ENCODE measurements at regions of chr2 and their contacts with region 1.

Region 1: DNA sequence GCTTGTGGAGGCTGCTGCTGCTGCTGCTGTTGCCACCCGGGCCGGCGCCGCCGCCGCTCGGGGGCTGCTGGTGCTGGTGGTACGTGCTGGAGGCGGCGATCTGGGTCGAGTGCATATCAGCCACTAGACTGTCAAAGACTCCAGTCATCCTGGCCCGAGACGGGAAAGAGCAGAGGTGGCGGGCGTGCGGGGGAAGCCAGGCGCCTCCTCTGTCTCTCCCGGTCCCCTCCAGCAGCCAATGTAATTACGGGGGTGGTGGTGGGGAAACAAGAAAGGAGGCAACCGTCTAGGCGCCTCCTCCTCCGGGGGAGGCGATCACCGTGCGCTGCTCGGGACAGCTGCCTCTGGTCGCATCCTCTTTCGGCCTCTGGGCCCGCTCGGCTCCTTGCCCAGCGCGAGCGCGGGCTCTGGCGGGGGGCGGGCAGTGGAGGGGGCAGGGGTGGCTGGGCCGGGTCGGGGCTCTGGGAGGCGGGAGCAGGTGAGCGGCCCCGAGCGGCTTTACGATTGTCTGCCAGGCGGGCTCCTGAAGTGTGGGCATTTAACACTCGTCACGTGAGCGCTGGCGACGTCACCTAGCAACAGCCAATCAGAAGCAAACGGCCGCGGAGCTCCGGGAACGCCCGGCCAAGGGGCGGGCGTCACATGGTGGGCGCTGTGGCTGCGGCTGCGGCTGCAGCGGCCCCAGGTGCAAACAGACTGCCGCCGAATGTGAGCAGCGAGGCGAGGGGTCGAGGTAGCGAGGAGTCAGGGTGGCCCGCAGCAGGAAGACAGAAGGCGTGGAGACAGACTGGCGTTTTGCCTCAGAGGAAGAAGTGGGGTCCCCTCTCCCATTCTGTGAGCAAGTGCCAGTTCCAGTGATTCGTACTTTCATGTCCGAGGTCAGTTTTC is at the start of gene DLX2:
- DNase-seq: peak; percentile 62 to 83 (median 68)
- H3K4me3 ChIP-seq: peak within 1 kb of the TSS; percentile 40
- H3K27ac ChIP-seq: no peak within 1 kb of the TSS
- H3K4me1 ChIP-seq: peaks cover 12% of the 10 kb centered on the region
- H3K27me3 ChIP-seq: peaks cover 20% of the 10 kb centered on the region
- CTCF ChIP-seq: no peak
- EP300 ChIP-seq: no peak
- POLR2A ChIP-seq: no peak
- total RNA-seq, gene DLX2: 0.12 TPM in 1 of 7 donors, not detected in the others

Region 2: DNA sequence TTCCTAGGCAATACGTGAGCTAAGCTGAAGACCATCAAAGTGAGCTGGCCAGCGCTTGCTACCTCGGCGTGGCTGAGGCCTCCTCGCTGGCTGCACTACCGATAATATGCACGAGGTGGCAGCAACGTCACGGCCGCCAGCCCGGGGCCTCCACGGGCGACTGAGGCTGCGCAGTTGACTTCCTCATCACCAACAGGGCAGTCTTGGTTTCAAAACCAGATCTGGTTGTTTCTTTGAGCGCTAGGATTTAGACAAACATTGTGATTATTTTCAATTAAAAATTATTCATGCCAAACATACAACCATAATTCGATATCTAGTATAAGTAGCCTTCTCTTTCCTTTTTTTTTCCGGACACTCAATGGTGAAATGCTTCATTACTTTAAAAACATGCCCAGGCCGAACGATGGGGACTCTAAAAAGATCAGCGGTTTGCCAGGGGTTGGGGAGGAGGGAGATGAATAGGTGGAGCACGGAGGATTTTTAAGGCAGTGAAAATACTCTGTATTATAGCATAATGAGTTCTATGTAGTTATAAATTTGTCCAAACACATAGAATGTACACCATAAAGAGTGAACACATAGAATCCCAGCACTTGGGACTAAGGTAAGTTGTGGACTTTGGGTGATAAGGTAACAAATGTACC is 528.4 kb before region 1 on chr2:
- intact Hi-C with region 1: loop called in 2 of 4 experiments (anchors 10 kb)
- DNase-seq: peak; percentile 72 to 88 (median 78)
- H3K4me3 ChIP-seq: no peak overlapping the region
- H3K27ac ChIP-seq: no peak overlapping the region
- H3K4me1 ChIP-seq: no peaks in the 10 kb centered on the region
- H3K27me3 ChIP-seq: no peaks in the 10 kb centered on the region
- CTCF ChIP-seq: peak; percentile 76 to 83 (median 80)
- EP300 ChIP-seq: no peak
- POLR2A ChIP-seq: no peak

Region 3: GRCh38 chr2:171703574-171704347 is 398.9 kb before region 1 on chr2:
- intact Hi-C with region 1: loop called in 3 of 4 experiments (anchors 5 to 10 kb)
- DNase-seq: no peak
- H3K4me3 ChIP-seq: no peak overlapping the region
- H3K27ac ChIP-seq: no peak overlapping the region
- H3K4me1 ChIP-seq: no peaks in the 10 kb centered on the region
- H3K27me3 ChIP-seq: no peaks in the 10 kb centered on the region
- CTCF ChIP-seq: peak in 1 of 3 donors; percentile 25
- EP300 ChIP-seq: no peak
- POLR2A ChIP-seq: no peak

Region 4: DNA sequence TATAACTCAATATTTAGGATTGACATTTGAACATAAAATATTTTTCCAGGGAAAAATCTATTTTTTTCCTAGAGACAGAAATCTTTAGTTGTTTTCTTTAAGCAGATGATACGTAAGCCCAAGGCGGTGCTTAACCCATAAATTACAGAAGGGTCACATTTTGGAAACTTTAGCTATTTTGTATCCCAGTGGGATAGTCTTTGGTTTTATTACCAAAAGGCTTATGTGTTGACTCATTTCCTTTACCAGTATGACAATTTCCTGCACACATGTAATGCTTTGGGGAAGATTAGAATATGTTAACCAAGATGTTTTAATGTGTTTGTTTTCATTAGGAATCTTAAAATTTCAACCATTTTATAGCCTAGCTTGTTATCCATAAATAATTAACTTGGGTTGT is 390.6 kb before region 1 on chr2:
- intact Hi-C with region 1: loop called in 3 of 4 experiments (anchors 5 to 10 kb)
- DNase-seq: no peak
- H3K4me3 ChIP-seq: no peak overlapping the region
- H3K27ac ChIP-seq: no peak overlapping the region
- H3K4me1 ChIP-seq: no peaks in the 10 kb centered on the region
- H3K27me3 ChIP-seq: no peaks in the 10 kb centered on the region
- CTCF ChIP-seq: no peak
- EP300 ChIP-seq: no peak
- POLR2A ChIP-seq: no peak

Region 5: DNA sequence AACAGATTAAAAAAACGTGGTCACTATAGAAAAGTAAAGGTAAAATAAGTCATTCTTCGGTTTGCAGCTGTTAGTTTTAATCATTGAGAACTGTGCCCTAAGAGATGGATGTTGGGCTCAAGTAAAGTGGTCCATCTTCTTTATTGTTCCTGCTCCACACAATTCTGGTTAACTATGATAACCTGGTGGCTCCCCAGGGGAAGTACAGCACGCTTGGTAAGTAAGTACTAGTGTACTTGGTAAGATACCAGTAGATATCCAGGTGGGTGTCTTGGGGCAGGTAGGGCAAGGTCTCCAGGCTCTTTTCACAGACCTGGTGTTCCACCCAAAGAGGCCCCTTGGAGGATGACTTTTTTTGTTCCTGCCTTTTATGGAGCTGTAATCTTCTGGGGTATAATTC is 31.6 kb after region 1 on chr2:
- intact Hi-C with region 1: no loop called
- DNase-seq: no peak
- H3K4me3 ChIP-seq: no peak overlapping the region
- H3K27ac ChIP-seq: no peak overlapping the region
- H3K4me1 ChIP-seq: no peaks in the 10 kb centered on the region
- H3K27me3 ChIP-seq: no peaks in the 10 kb centered on the region
- CTCF ChIP-seq: no peak
- EP300 ChIP-seq: no peak
- POLR2A ChIP-seq: no peak

Measured in ovary (tissue), 10 donors.